ENCODE measurements at regions of chr19 and their contacts with region 1.

Region 1: DNA sequence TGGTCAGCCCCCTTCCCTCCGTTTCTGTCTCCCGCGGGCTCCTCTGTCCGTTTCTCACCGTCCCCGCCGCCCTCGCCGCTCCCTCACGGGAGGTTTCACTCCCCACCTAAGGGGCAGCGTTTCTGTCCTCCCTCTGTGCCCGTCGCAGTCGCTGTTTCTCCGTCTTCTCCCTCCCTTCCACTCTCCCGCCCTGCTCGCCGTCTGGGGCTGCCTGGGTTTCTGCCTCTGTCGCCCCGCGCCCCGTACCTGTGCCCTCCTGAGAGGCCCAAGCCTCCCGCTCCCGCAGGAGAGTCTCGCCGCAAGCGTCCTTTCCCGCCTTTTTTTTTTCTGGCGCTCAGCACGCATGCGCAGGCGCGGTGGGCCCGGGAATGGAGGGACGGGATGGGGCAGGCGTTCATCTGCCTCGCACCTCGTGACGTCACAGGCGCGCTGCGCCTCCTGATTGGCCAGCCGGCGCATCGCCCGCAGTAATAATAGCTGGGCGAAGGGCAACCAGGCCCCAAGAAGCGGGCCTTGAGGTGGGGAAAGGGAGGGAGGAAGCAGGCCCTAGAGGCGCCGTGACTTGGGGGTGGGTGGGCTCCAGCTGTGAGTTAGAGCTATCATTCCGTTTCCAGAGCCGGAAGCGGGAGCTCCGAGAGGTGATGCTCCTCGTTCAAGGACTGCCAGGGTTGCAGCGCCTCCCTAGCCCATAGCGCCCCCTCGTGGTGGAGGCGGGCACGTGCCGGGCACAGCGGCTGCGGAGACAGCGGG is 15.4 kb downstream of the SSC5D start:
- DNase-seq: peak; percentile 90
- H3K4me3 Mint-ChIP-seq: peak overlapping the region; percentile 75
- H3K27ac Mint-ChIP-seq: peak overlapping the region; percentile 75
- H3K4me1 Mint-ChIP-seq: peaks cover 15% of the 10 kb centered on the region
- H3K27me3 Mint-ChIP-seq: peaks cover 3% of the 10 kb centered on the region

Region 2: DNA sequence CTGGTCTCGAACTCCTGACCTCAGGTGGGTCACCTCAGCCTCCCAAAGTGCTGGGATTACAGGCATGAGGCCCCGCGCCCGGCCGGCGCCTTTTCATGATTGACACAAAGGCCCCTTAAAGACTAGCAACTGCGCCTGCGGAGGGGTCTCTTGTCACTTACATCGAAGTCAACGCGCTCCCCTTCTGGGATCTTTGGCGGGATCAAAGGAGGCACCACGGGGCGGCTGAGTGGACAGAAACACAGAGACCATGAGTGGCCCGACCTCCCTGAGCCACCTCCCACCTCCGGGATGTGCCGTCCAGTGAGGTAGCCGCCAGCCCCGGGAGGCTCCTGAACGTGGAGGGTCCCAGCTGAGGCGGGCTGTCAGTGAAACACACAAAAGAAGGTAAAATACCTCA is 362.0 kb before region 1 on chr19:
- intact Hi-C with region 1: loop called (anchors 5 kb)
- DNase-seq: no peak
- H3K4me3 Mint-ChIP-seq: no peak overlapping the region
- H3K27ac Mint-ChIP-seq: no peak overlapping the region
- H3K4me1 Mint-ChIP-seq: peaks cover 1% of the 10 kb centered on the region
- H3K27me3 Mint-ChIP-seq: peaks cover 17% of the 10 kb centered on the region

Region 3: DNA sequence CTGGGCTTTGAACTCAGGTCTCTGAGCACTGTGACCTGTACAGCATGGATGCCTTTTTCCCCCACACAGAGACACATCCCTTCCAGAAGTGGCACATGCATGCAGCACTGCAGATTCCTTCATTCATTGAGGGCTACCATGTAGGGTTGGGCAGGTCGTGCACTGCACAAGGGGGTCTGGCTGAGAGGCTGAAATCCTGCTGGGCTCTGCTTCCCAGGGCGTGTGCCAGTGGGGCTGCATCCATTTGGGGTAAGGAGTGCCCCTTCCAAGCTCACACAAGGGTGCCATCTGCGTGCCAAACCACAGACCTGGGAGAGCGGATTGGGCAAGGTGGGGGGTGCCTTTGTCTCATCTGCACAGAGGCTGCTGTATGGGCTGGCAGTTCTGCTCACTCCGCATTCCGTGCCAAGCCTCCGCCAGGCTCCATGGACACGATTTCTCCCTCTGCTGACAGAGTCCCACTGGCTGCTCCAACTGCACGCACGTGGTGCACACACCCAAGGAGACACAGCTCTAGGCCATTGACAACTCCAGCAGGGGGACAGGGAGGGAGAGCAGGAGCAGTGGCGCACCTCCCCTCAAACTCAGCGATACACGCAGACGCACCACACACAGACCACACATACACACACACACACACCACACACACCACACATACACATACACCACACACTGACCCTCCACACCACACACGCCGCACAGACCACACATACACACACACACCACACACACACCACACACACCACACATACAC is 56.1 kb before region 1 on chr19:
- intact Hi-C with region 1: no loop called
- DNase-seq: no peak
- H3K4me3 Mint-ChIP-seq: no peak overlapping the region
- H3K27ac Mint-ChIP-seq: no peak overlapping the region
- H3K4me1 Mint-ChIP-seq: no peaks in the 10 kb centered on the region
- H3K27me3 Mint-ChIP-seq: peaks cover 38% of the 10 kb centered on the region

Region 4: GRCh38 chr19:55467236-55468053 is 36.2 kb before region 1 on chr19:
- intact Hi-C with region 1: loop called (anchors 1 kb)
- DNase-seq: peak; percentile 60
- H3K4me3 Mint-ChIP-seq: no peak overlapping the region
- H3K27ac Mint-ChIP-seq: no peak overlapping the region
- H3K4me1 Mint-ChIP-seq: peaks cover 7% of the 10 kb centered on the region
- H3K27me3 Mint-ChIP-seq: no peaks in the 10 kb centered on the region

Region 5: GRCh38 chr19:55493052-55493649 is 10.5 kb before region 1 on chr19:
- intact Hi-C with region 1: no loop called
- DNase-seq: no peak
- H3K4me3 Mint-ChIP-seq: no peak overlapping the region
- H3K27ac Mint-ChIP-seq: no peak overlapping the region
- H3K4me1 Mint-ChIP-seq: no peaks in the 10 kb centered on the region
- H3K27me3 Mint-ChIP-seq: peaks cover 2% of the 10 kb centered on the region